Naive thymus-derived CD4-positive, alpha-beta T cell (primary cell): ENCODE measurements at regions of chrX and their contacts with region 1.

Region 1: GRCh38 chrX:134186362-134187121 is 50.4 kb upstream of the CCDC160 start:
- DNase-seq: peak in 8 of 9 donors; percentile 60 to 88 (median 76)
- ATAC-seq: peak; percentile 94
- H3K4me3 ChIP-seq: peak overlapping the region; percentile 24
- H3K4me3 Mint-ChIP-seq: peak overlapping the region; percentile 21 to 98 (median 74)
- H3K27ac ChIP-seq: no peak overlapping the region
- H3K27ac Mint-ChIP-seq: peak overlapping the region in 5 of 9 donors; percentile 4 to 96 (median 44)
- H3K4me1 ChIP-seq: peaks cover 10 to 19% of the 10 kb centered on the region in 2 donors
- H3K4me1 Mint-ChIP-seq: peaks cover 0 to 50% (median 37%) of the 10 kb centered on the region in 7 donors
- H3K27me3 ChIP-seq: no peaks in the 10 kb centered on the region
- H3K27me3 Mint-ChIP-seq: no peaks in the 10 kb centered on the region

Region 2: DNA sequence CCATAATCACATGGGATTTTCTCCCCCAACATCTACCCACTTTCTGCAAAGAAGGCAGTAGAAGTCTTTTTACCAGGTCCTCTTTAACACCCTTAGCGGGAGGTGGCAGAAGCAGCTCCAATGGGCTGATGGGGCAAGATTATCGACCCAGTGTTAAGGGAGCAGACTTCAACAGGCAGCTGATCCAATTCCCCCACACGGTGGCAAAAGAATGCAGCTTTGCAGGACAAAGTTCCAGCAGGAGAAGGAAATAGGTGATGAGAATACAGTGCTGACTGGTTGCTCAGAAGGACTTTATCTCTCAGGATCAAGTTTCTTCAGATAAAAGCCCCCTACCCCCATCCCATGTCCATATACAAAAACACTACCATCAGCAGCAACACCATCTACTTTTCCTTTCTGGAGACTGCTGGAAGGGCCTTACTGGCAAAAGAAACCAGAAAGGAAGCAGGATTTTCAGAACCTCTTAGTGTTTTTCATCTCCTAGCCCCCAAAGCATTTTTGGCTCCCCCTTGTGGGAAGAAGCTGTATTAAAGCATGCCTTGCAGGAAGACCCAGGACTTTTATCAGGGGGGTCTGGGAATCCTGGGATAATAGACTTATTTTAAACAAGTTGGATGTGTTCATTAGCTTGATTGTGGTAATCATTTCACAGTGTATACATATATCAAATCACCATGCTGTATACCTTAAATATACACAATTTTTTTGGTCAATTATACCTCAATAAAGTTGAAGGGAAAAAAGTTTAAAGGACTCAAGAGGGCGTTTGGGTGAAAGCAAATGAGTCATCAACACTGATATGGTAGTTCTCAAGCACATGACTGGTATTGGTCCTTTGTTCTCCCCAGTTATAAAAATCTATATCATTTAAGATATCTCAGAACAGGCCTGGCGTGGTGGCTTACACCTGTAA is 347.5 kb before region 1 on chrX:
- CTCF ChIA-PET with region 1: no interaction called
- POLR2A ChIA-PET with region 1: no interaction called
- intact Hi-C with region 1: loop called in 1 of 2 experiments (anchors 2 kb)
- DNase-seq: peak in 8 of 9 donors; percentile 4 to 49 (median 24)
- ATAC-seq: no peak
- H3K4me3 ChIP-seq: no peak overlapping the region
- H3K4me3 Mint-ChIP-seq: no peak overlapping the region
- H3K27ac ChIP-seq: no peak overlapping the region
- H3K27ac Mint-ChIP-seq: no peak overlapping the region
- H3K4me1 ChIP-seq: no peaks in the 10 kb centered on the region
- H3K4me1 Mint-ChIP-seq: no peaks in the 10 kb centered on the region
- H3K27me3 ChIP-seq: no peaks in the 10 kb centered on the region
- H3K27me3 Mint-ChIP-seq: no peaks in the 10 kb centered on the region

Region 3: GRCh38 chrX:134026565-134027311 is 159.8 kb before region 1 on chrX:
- CTCF ChIA-PET with region 1: interaction called, 5 read pairs
- POLR2A ChIA-PET with region 1: interaction called, 3 read pairs
- intact Hi-C with region 1: loop called in 1 of 2 experiments (anchors 1 kb)
- DNase-seq: peak in 8 of 9 donors; percentile 8 to 51 (median 38)
- ATAC-seq: peak; percentile 65
- H3K4me3 ChIP-seq: no peak overlapping the region
- H3K4me3 Mint-ChIP-seq: peak overlapping the region; percentile 38 to 76 (median 56)
- H3K27ac ChIP-seq: no peak overlapping the region
- H3K27ac Mint-ChIP-seq: peak overlapping the region in 1 of 9 donors; percentile 13
- H3K4me1 ChIP-seq: no peaks in the 10 kb centered on the region
- H3K4me1 Mint-ChIP-seq: peaks cover 0 to 14% (median 10%) of the 10 kb centered on the region in 7 donors
- H3K27me3 ChIP-seq: no peaks in the 10 kb centered on the region
- H3K27me3 Mint-ChIP-seq: peaks cover 0 to 3% (median 0%) of the 10 kb centered on the region in 5 donors

Region 4: GRCh38 chrX:134171661-134172587 is 14.6 kb before region 1 on chrX:
- CTCF ChIA-PET with region 1: no interaction called
- POLR2A ChIA-PET with region 1: interaction called, 4 read pairs
- intact Hi-C with region 1: loop called (anchors 1 kb)
- DNase-seq: peak in 8 of 9 donors; percentile 6 to 61 (median 20)
- ATAC-seq: peak; percentile 51
- H3K4me3 ChIP-seq: peak overlapping the region; percentile 44
- H3K4me3 Mint-ChIP-seq: peak overlapping the region; percentile 89 to 96 (median 94)
- H3K27ac ChIP-seq: peak overlapping the region; percentile 48
- H3K27ac Mint-ChIP-seq: peak overlapping the region in 7 of 9 donors; percentile 1 to 95 (median 57)
- H3K4me1 ChIP-seq: peaks cover 0 to 3% of the 10 kb centered on the region in 2 donors
- H3K4me1 Mint-ChIP-seq: peaks cover 6 to 29% (median 12%) of the 10 kb centered on the region in 7 donors
- H3K27me3 ChIP-seq: no peaks in the 10 kb centered on the region
- H3K27me3 Mint-ChIP-seq: peaks cover 0 to 5% (median 0%) of the 10 kb centered on the region in 5 donors

Region 5: DNA sequence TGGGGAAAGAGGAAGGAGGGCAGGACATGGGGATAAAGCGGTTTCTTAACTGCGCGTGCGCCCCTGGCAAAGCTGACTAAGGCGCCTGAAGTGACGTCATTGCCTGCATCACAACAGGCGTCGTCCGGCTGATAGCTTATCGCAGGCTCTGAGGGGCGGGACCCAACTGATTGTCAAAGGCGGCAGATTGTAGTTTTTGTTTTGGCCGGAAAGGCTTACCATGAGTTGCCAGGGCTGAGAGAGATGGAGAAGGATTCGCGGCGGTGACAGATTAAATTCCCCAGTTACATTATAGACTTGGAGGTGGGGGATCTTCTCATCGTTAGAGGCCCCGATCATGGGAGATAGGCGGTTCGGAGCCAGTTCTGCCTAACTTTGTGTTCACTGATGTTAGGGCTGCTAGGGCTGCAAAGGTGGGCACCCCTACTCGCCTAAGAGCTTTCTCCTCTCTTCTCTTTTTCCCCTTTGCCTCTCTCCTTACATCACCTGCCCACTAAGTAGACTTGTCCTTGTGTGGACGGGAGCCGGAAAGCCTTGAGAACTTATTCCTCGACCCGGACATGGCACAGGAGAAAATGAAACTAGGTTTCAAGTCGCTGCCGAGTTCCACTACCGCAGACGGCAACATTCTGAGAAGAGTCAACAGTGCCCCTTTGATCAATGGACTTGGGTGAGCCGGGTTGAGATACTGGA is 620.6 kb after region 1 on chrX:
- CTCF ChIA-PET with region 1: no interaction called
- POLR2A ChIA-PET with region 1: no interaction called
- intact Hi-C with region 1: loop called in 1 of 2 experiments (anchors 5 kb)
- DNase-seq: peak; percentile 56 to 91 (median 85)
- ATAC-seq: peak; percentile 93
- H3K4me3 ChIP-seq: peak overlapping the region; percentile 79
- H3K4me3 Mint-ChIP-seq: peak overlapping the region; percentile 89 to 99 (median 95)
- H3K27ac ChIP-seq: peak overlapping the region; percentile 94
- H3K27ac Mint-ChIP-seq: peak overlapping the region; percentile 87 to 100 (median 97)
- H3K4me1 ChIP-seq: peaks cover 4% of the 10 kb centered on the region in 2 donors
- H3K4me1 Mint-ChIP-seq: peaks cover 8 to 39% (median 27%) of the 10 kb centered on the region in 7 donors
- H3K27me3 ChIP-seq: no peaks in the 10 kb centered on the region
- H3K27me3 Mint-ChIP-seq: peaks cover 0 to 2% (median 0%) of the 10 kb centered on the region in 5 donors